Mammary epithelial cell (primary cell): ENCODE measurements at regions of chr9 and their contacts with region 1.

Region 1: GRCh38 chr9:130177898-130178805 is 5.9 kb downstream of the NCS1 start:
- DNase-seq: no peak
- H3K4me3 ChIP-seq: no peak overlapping the region
- H3K27ac ChIP-seq: no peak overlapping the region
- H3K4me1 ChIP-seq: peaks cover 13% of the 10 kb centered on the region
- H3K27me3 ChIP-seq: no peaks in the 10 kb centered on the region
- CTCF ChIP-seq: no peak

Region 2: DNA sequence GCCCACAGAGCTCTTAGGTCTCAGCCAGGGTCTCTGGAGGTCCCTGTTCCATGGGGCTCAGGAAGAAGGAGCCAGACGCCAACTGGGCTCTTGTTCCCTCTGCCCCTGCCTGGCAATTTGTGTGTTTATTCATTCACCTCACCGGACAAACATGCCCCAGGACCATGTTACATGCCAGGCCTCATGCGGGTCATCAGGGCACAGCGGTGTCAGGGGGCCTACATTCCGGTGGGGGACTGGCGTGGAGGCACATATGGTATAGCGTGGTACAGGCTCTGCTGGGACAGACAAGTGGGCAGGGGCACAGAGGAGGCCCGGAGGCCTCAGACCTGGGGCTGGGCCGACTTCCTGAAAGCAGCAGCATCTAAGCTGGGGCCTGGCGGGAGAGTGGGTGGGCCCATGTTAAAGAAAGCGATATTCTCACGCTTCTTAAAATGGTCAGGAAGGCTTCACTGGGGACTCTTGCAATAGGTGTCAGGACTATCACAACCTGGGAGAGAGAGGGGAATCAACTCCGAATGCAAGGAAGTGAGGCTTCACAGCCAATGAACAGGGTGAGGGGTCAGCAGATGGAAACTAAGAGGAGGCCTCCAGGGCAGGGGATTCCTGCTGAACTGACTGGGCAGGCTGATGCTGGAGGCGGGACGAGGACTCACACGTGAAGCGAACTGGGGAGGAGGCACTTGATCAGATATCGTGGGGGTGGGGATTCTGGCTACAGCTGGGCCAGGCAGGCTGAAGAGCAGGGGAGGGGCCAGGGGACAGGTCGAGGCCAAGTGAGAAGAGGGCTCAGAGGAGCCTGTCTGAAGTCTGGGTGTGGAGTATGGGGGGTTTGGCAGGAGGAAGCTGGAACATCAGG is 36.0 kb after region 1 on chr9:
- CTCF ChIA-PET with region 1: no interaction called
- dilution Hi-C with region 1: no loop called
- in situ Hi-C with region 1: no loop called
- intact Hi-C with region 1: loop called (anchors 1 kb)
- DNase-seq: no peak
- H3K4me3 ChIP-seq: no peak overlapping the region
- H3K27ac ChIP-seq: no peak overlapping the region
- H3K4me1 ChIP-seq: peaks cover 27% of the 10 kb centered on the region
- H3K27me3 ChIP-seq: no peaks in the 10 kb centered on the region
- CTCF ChIP-seq: no peak